Activated T-helper 2 cell treated with anti-CD3 and anti-CD28 coated beads, Interferon-gamma antibody, Interleukin-2, Interleukin-4, amounts not matched to agents 10 μg/mL and 5 μg/mL and 100 μg/mL, durations not matched to agents 14 hours and 24 hours and 36 hours (primary cell): ENCODE measurements at regions of chr18 and their contacts with region 1.

Region 1: DNA sequence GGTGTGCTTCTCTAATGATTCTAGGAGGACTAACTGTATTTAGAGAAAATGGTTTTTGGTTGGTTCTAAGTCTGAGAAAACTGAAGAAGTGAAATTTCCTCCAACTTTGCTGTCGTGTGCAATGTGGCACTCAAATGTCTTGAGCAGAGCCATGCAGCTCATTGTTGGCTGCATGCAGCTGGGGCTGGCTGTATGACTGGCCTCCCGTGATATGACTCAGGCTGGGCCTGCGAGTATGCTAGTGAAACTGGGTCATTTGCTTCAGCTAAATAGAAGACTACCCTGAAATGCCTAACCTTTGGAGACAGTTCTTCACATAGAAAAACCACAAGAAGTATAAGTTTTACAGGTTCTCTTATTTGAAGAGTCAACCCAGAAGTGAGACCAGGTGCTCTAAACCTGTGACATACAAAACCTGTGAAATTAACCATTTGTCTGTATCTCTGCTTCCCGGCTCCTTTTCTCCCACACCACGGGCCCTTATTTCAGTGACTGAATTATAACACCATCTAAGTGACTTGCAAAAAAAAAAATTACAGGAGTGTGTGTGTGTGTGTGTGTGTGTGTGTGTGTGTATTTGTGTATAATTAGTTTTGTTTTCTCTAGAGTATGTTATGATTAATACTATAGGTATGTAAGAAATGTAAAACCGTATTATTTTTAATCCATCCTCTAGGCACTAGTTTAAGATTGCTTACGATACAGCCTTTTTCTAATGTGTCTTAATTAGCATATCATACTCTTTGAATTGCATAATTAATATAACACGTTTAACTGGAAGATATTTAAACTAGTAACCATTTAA is 15.9 kb downstream of the POLI start:
- DNase-seq: peak; percentile 44
- H3K4me3 Mint-ChIP-seq: no peak overlapping the region
- H3K27ac Mint-ChIP-seq: peak overlapping the region; percentile 79
- H3K4me1 Mint-ChIP-seq: peaks cover 34% of the 10 kb centered on the region
- H3K27me3 Mint-ChIP-seq: no peaks in the 10 kb centered on the region

Region 2: GRCh38 chr18:54043484-54044251 is 241.5 kb before region 1 on chr18:
- intact Hi-C with region 1: no loop called
- DNase-seq: no peak
- H3K4me3 Mint-ChIP-seq: no peak overlapping the region
- H3K27ac Mint-ChIP-seq: no peak overlapping the region
- H3K4me1 Mint-ChIP-seq: no peaks in the 10 kb centered on the region
- H3K27me3 Mint-ChIP-seq: peaks cover 5% of the 10 kb centered on the region

Region 3: DNA sequence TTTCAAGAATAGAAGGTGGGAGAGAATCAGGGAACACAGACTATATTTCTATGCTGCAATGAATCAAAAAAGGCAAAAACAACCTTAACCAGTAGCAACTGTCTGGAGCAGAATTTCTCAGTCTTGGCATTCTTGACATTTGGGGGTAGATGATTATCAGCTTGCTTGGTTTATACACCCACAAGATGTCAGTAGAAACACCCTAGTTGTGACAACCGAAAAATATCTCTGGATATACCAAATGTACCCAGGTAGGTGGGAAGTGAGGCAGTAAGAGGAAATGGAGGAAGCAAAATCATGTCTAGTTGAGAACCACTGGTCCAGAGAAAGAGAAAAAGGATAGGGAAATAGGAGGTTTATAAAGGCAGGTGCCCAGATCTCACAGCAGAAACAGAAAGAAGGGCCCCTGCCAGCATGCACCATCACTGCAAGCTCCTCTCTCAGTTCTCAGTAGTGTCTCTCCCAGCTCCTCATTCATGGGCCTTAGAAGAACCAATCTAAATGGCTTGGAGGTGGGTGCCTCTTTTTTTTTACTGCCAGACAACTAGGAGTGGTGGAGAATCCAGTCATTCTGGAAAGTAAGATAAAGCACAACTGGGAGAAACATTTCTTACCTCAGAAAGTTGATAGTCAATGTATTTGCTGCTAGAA is 111.1 kb before region 1 on chr18:
- intact Hi-C with region 1: loop called (anchors 1 kb)
- DNase-seq: no peak
- H3K4me3 Mint-ChIP-seq: peak overlapping the region; percentile 41
- H3K27ac Mint-ChIP-seq: peak overlapping the region; percentile 94
- H3K4me1 Mint-ChIP-seq: peaks cover 61% of the 10 kb centered on the region
- H3K27me3 Mint-ChIP-seq: no peaks in the 10 kb centered on the region

Region 4: GRCh38 chr18:54209471-54210180 is 75.6 kb before region 1 on chr18:
- intact Hi-C with region 1: loop called (anchors 1 kb)
- DNase-seq: no peak
- H3K4me3 Mint-ChIP-seq: peak overlapping the region; percentile 53
- H3K27ac Mint-ChIP-seq: peak overlapping the region; percentile 84
- H3K4me1 Mint-ChIP-seq: peaks cover 59% of the 10 kb centered on the region
- H3K27me3 Mint-ChIP-seq: no peaks in the 10 kb centered on the region

Region 5: GRCh38 chr18:54269893-54270844 is 15.0 kb before region 1 on chr18:
- intact Hi-C with region 1: loop called (anchors 1 kb)
- DNase-seq: no peak
- H3K4me3 Mint-ChIP-seq: peak overlapping the region; percentile 85
- H3K27ac Mint-ChIP-seq: peak overlapping the region; percentile 97
- H3K4me1 Mint-ChIP-seq: peaks cover 26% of the 10 kb centered on the region
- H3K27me3 Mint-ChIP-seq: no peaks in the 10 kb centered on the region

Region 6: GRCh38 chr18:54357660-54358494 is 72.7 kb after region 1 on chr18 and contains the starts of genes C18orf54 and STARD6:
- intact Hi-C with region 1: loop called (anchors 2 kb)
- DNase-seq: peak; percentile 90
- H3K4me3 Mint-ChIP-seq: peak within 1 kb of the TSS; percentile 99
- H3K27ac Mint-ChIP-seq: peak within 1 kb of the TSS; percentile 97
- H3K4me1 Mint-ChIP-seq: peaks cover 21% of the 10 kb centered on the region
- H3K27me3 Mint-ChIP-seq: no peaks in the 10 kb centered on the region
- total RNA-seq, gene C18orf54: 10.4 and 10.9 TPM in 2 replicates
- total RNA-seq, gene STARD6: not detected in 2 replicates